Activated CD4-positive, alpha-beta memory T cell treated with anti-CD3 and anti-CD28 coated beads, Interleukin-2, amount 10 ng/mL, durations not matched to agents 7 days and 5 days (primary cell): ENCODE measurements at regions of chrX and their contacts with region 1.

Region 1: GRCh38 chrX:154428176-154429010 is at the start of gene ATP6AP1:
- DNase-seq: peak; percentile 92
- H3K4me3 Mint-ChIP-seq: peak within 1 kb of the TSS; percentile 75
- H3K27ac Mint-ChIP-seq: peak within 1 kb of the TSS; percentile 69
- H3K4me1 Mint-ChIP-seq: peaks cover 25% of the 10 kb centered on the region
- H3K27me3 Mint-ChIP-seq: no peaks in the 10 kb centered on the region
- total RNA-seq, gene ATP6AP1: 52.3 to 53.2 TPM

Region 2: DNA sequence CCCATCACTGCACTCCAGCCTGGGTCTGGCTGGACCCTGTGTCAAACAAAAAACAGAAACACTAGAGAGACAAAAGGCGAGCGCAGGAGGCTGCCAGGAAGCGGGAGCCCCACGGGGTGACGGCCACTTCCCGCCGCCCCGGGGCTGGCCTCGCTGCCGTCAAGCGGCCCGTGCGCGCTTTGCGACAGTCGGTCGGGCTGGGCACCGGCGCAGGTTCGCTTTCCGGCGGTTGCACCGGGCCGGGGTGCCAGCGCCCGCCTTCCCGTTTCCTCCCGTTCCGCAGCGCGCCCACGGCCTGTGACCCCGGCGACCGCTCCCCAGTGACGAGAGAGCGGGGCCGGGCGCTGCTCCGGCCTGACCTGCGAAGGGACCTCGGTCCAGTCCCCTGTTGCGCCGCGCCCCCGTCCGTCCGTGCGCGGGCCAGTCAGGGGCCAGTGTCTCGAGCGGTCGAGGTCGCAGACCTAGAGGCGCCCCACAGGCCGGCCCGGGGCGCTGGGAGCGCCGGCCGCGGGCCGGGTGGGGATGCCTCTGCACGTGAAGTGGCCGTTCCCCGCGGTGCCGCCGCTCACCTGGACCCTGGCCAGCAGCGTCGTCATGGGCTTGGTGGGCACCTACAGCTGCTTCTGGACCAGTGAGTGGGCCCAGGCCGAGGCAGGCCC is 16.9 kb before region 1 on chrX and contains the start of gene TAFAZZIN:
- CTCF ChIA-PET with region 1: no interaction called
- POLR2A ChIA-PET with region 1: interaction called, 26 read pairs
- DNase-seq: peak; percentile 83
- H3K4me3 Mint-ChIP-seq: peak within 1 kb of the TSS; percentile 93
- H3K27ac Mint-ChIP-seq: peak within 1 kb of the TSS; percentile 92
- H3K4me1 Mint-ChIP-seq: peaks cover 18% of the 10 kb centered on the region
- H3K27me3 Mint-ChIP-seq: no peaks in the 10 kb centered on the region
- total RNA-seq, gene TAFAZZIN: 93.7 to 93.9 TPM